ENCODE measurements at regions of chr9 and their contacts with region 1.

Region 1: GRCh38 chr9:125374443-125375309 is 113.0 kb downstream of the GAPVD1 start:
- DNase-seq: peak; percentile 28
- ATAC-seq: peak; percentile 95
- H3K4me3 ChIP-seq: no peak overlapping the region
- H3K27ac ChIP-seq: no peak overlapping the region
- H3K4me1 ChIP-seq: peaks cover 0 to 8% of the 10 kb centered on the region in 2 experiments; a peak in 1 of 4 replicates
- H3K27me3 ChIP-seq: no peaks in the 10 kb centered on the region
- CTCF ChIP-seq: peak; percentile 80 to 86 (median 81)
- POLR2A ChIP-seq: no peak
- RAD21 ChIP-seq: peak; percentile 98

Region 2: GRCh38 chr9:124754289-124754688 is 620.4 kb before region 1 on chr9:
- CTCF ChIA-PET with region 1: no interaction called
- POLR2A ChIA-PET with region 1: no interaction called
- RAD21 ChIA-PET with region 1: no interaction called
- intact Hi-C with region 1: no loop called
- DNase-seq: no peak
- ATAC-seq: peak; percentile 75
- H3K4me3 ChIP-seq: no peak overlapping the region
- H3K27ac ChIP-seq: no peak overlapping the region
- H3K4me1 ChIP-seq: peaks cover 22 to 39% of the 10 kb centered on the region in 2 experiments
- H3K27me3 ChIP-seq: no peaks in the 10 kb centered on the region
- CTCF ChIP-seq: peak; percentile 50 to 69 (median 60); a peak in 5 of 6 replicates
- POLR2A ChIP-seq: no peak
- RAD21 ChIP-seq: peak; percentile 73

Region 3: DNA sequence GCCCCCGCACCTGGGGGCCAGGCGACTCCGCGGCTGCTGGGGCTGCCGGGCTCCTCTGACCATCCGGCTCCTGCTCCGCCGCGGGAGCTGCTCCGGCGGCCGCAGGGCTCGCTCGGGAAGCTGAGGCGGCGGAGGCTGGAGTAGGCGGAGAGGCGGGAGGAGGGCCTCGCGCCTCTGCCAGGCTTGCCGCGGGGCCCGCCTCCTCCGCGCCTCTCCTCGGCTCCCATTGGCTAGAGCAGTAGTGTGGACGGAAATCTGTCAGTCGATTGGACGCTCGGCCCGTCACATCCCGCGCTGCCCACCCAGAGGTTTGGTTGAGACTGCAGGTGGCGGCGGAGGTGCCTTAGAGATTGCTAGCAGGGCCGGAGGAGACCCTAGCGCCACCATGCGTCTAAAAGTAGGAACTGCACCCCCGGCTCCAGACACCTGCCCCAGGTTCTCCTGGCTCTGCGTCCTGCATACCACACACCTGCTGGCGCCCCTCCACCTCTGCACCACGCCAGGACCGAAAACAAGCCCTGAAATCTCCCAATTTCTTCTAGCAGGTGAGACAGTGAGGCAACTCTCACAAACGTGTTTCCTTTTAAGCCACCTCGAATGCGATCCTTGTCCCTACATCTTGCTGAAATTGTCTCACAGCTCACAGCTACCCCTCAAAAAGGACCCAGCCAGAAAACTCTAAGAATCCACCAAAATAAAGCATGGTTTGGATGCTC is 231.1 kb before region 1 on chr9 and contains the start of gene SCAI:
- CTCF ChIA-PET with region 1: no interaction called
- POLR2A ChIA-PET with region 1: no interaction called
- RAD21 ChIA-PET with region 1: no interaction called
- intact Hi-C with region 1: loop called (anchors 2 kb)
- DNase-seq: peak; percentile 98
- ATAC-seq: peak; percentile 99
- H3K4me3 ChIP-seq: peak within 1 kb of the TSS; percentile 63 to 71
- H3K27ac ChIP-seq: no peak within 1 kb of the TSS; the same call in 1 of the 2 replicates
- H3K4me1 ChIP-seq: peaks cover 7 to 12% of the 10 kb centered on the region in 2 experiments; a peak in 3 of 4 replicates
- H3K27me3 ChIP-seq: no peaks in the 10 kb centered on the region
- CTCF ChIP-seq: peak; percentile 83 to 99 (median 97)
- POLR2A ChIP-seq: no peak
- RAD21 ChIP-seq: peak; percentile 88
- total RNA-seq, gene SCAI: 14.0 TPM

Region 4: GRCh38 chr9:125255781-125256391 is 118.8 kb before region 1 on chr9:
- CTCF ChIA-PET with region 1: interaction called, 7 read pairs
- POLR2A ChIA-PET with region 1: no interaction called
- RAD21 ChIA-PET with region 1: no interaction called
- intact Hi-C with region 1: loop called (anchors 1 kb)
- DNase-seq: no peak
- ATAC-seq: peak; percentile 77
- H3K4me3 ChIP-seq: no peak overlapping the region
- H3K27ac ChIP-seq: no peak overlapping the region
- H3K4me1 ChIP-seq: peaks cover 3 to 4% of the 10 kb centered on the region in 2 experiments; a peak in 2 of 4 replicates
- H3K27me3 ChIP-seq: no peaks in the 10 kb centered on the region
- CTCF ChIP-seq: peak; percentile 19 to 41 (median 41); a peak in 4 of 6 replicates
- POLR2A ChIP-seq: no peak
- RAD21 ChIP-seq: peak; percentile 76

Region 5: DNA sequence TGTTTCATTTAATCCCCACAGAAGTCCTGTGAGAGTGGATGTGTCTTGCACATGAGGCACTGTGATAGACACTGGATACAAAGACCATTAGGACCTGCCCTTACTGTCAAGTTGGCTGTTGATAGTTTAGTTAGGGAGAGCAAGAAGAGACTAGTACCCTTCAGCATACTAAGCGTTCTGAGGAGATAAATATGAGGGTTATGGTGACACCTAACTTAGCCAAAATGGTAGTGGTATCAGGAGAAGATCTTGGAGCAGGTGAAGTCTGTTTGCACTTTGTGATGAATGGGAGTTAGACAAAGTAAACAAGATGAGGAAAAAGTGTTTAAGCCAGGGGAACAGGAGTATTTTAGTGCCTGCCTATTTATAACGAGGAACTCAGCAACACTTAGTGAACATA is 66.0 kb before region 1 on chr9:
- CTCF ChIA-PET with region 1: no interaction called
- POLR2A ChIA-PET with region 1: no interaction called
- RAD21 ChIA-PET with region 1: no interaction called
- intact Hi-C with region 1: no loop called
- DNase-seq: no peak
- ATAC-seq: no peak
- H3K4me3 ChIP-seq: no peak overlapping the region
- H3K27ac ChIP-seq: no peak overlapping the region
- H3K4me1 ChIP-seq: no peaks in the 10 kb centered on the region
- H3K27me3 ChIP-seq: no peaks in the 10 kb centered on the region
- CTCF ChIP-seq: no peak
- POLR2A ChIP-seq: no peak
- RAD21 ChIP-seq: no peak

Region 6: DNA sequence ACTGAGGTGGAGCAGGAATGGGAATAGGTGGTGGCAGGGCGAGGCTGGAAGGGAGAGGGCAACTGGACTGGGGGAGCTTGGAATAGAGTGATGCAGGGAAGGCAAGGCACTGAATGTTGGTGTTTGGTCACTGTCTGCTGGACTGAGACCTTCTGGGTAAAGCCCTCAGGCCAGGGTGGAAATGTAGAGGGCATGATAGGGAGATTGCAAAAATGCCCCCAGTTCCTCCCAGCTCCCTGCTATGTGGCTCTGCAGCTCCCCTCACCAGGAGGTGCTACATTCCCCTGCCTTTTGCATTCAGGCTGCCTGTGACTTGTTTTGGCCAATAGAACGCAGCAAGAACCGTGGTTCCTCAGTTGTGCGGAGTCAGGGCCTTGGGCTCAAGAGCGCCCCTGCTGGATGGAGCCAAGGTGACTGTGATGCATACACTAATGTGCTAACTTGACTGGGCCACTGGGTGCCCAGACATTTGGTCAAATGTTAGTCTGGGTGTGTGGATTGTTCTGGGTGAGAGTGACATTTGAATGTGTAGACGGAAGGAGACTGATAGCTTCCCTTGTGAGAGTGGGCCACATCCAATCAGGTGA is 828.5 kb after region 1 on chr9:
- CTCF ChIA-PET with region 1: no interaction called
- POLR2A ChIA-PET with region 1: no interaction called
- RAD21 ChIA-PET with region 1: no interaction called
- intact Hi-C with region 1: no loop called
- DNase-seq: no peak
- ATAC-seq: peak; percentile 70
- H3K4me3 ChIP-seq: no peak overlapping the region
- H3K27ac ChIP-seq: no peak overlapping the region
- H3K4me1 ChIP-seq: no peaks in the 10 kb centered on the region
- H3K27me3 ChIP-seq: no peaks in the 10 kb centered on the region
- CTCF ChIP-seq: peak in 2 of 3 experiments; percentile 47 to 50; a peak in 4 of 6 replicates
- POLR2A ChIP-seq: no peak
- RAD21 ChIP-seq: no peak

Measured in HCT116 (cell line).